ENCODE measurements at regions of chr3 and their contacts with region 1.

Region 1: DNA sequence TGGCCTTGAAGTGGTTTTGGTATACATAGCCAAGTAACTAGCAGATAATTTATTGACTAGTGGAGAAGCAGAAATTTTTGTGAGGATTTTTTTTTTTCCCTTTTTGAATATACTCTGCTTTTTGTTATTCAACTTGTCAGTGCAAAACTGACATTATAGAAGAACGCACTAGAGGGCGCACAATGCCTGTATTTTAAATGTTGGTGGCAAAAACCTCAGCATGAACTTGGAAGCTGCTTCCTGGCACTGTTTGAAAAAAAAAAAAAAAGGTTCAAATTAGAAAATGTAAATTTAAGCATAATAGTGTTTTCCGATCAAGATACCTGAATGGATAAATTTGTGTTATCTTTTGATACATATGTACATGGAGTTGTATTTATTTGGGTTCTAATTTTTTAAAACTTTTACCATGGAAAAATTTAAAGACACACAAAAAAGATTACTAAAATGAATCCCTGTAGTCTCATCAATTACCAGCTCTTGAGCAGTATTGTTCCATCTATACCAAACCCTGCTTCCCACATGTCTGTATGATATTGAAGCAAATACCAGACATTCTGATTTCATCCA is 56.0 kb downstream of the SLC25A26 start:
- DNase-seq: no peak

Region 2: DNA sequence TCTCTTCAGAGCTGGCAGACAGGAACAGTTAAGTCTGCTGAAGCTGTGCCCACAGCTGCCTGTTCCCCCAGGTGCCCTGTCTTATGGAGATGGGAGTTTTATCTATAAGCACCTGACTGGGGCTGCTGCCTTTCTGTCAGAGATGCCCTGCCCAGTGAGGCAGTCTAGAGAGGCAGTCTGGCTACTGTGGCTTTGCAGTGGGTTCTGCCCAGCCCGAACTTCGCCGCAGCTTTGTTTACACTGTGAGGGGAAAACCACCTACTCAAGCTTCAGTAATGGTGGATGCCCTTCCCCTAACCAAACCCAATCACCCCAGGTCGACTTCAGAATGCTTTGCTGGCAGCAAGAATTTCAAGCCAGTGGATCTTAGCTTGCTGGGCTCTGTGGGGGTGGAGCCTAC is 35.2 kb after region 1 on chr3:
- intact Hi-C with region 1: no loop called
- DNase-seq: no peak

Region 3: GRCh38 chr3:66372681-66373350 is 96.0 kb after region 1 on chr3:
- intact Hi-C with region 1: loop called (anchors 1 kb)
- DNase-seq: no peak

Region 4: DNA sequence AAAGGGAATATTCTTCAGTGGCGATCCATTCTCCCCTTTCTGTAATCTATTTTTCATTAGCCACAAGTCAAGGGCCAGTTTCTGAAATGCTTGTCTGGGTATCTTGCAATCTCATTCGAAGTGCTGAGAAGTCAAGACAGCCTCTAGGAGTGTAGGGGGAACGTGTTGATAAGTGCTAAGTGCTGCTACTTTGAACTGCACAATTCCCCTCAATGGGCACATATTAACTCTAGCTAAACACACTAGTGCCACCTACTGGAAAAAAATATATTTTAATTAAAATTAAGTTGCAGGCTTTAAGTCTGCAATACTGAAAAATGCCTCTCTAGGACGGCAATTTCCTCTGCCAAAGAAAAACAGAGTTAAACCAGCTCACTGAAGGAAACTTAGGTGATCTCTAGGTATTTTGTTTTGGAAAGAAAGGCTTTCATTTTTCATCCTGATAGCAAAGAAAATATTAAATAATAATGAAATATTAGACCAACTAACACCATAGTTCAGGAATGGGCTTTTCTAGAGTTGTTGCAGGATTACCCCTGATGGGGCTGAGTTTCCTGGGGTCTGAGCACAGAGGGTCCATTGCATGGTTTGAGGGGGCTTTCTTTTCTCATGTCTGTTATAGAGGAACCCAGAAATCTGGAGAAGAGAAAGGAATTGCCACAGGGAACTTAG is 539.4 kb after region 1 on chr3:
- intact Hi-C with region 1: loop called (anchors 2 kb)
- DNase-seq: no peak

Measured in cardiac septum (tissue), 1 donor.